PC-9 (cell line): ENCODE measurements at regions of chr13 and their contacts with region 1.

Region 1: GRCh38 chr13:43006893-43007631 is 15.0 kb upstream of the EPSTI1 start:
- DNase-seq: peak in 1 of 2 experiments; percentile 49
- H3K4me3 ChIP-seq: no peak overlapping the region
- H3K27ac ChIP-seq: peak overlapping the region; percentile 62
- H3K4me1 ChIP-seq: peaks cover 34% of the 10 kb centered on the region
- H3K27me3 ChIP-seq: no peaks in the 10 kb centered on the region
- CTCF ChIP-seq: no peak

Region 2: GRCh38 chr13:42985312-42986175 is 21.5 kb before region 1 on chr13:
- CTCF ChIA-PET with region 1: no interaction called
- POLR2A ChIA-PET with region 1: interaction called, 16 read pairs
- intact Hi-C with region 1: no loop called
- DNase-seq: peak in 1 of 2 experiments; percentile 46
- H3K4me3 ChIP-seq: no peak overlapping the region
- H3K27ac ChIP-seq: 0 out of 2 replicates have a peak overlapping the region, but pooled peaks have one; percentile 19
- H3K4me1 ChIP-seq: peaks cover 34% of the 10 kb centered on the region
- H3K27me3 ChIP-seq: no peaks in the 10 kb centered on the region
- CTCF ChIP-seq: no peak

Region 3: DNA sequence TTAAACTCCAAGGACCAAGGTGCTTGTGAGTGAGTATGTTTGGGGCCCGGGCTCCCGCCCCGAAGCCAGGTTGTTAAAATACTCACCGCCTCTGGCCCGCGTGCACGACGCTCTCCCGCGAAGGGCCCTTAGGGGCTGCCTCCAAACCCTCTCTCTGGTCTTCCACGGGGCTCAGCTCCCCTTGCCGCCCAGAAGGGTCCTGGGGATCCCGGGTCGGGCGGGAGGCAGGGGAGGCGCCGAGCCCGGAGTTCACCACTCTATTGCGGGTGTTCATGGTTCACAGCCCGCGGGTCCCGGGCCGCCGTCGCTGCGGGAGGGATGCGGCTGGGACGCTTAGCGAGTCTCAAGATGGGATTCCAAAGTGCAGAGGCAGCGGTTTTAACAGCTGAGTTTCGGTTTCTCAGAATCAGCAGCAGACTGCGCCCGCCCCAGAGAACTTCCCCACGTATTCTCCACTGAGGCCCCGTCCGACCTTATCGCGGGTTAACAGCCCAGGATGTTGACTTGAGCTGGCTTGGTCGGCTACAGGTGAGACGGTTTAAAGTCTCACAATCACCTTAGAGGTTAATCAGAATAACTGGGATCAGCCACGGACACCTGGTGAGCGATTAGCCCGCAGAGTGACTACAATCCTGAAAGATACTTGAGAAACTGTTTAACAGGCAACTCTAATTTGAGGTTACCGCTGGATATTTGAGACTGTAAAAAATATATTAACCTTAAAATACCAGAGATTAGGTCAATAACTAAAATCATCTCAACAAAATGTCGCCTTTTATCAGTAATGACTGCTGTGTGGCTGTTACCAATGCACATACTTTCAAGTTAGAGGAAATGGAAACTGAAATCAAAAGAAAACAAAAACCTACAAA is 14.9 kb before region 1 on chr13 and contains the start of gene EPSTI1:
- CTCF ChIA-PET with region 1: interaction called, 5 read pairs
- POLR2A ChIA-PET with region 1: interaction called, 6 read pairs
- intact Hi-C with region 1: loop called (anchors 1 kb)
- DNase-seq: peak in 1 of 2 experiments; percentile 24
- H3K4me3 ChIP-seq: peak within 1 kb of the TSS; percentile 36; the same call in 1 of the 2 replicates
- H3K27ac ChIP-seq: no peak within 1 kb of the TSS
- H3K4me1 ChIP-seq: peaks cover 11% of the 10 kb centered on the region
- H3K27me3 ChIP-seq: no peaks in the 10 kb centered on the region
- CTCF ChIP-seq: no peak
- total RNA-seq, gene EPSTI1: 2.7 and 3.4 TPM in 2 replicates

Region 4: GRCh38 chr13:43303033-43303729 is 296.1 kb after region 1 on chr13:
- CTCF ChIA-PET with region 1: no interaction called
- POLR2A ChIA-PET with region 1: no interaction called
- intact Hi-C with region 1: no loop called
- DNase-seq: peak in 1 of 2 experiments; percentile 39
- H3K4me3 ChIP-seq: no peak overlapping the region
- H3K27ac ChIP-seq: no peak overlapping the region
- H3K4me1 ChIP-seq: no peaks in the 10 kb centered on the region
- H3K27me3 ChIP-seq: no peaks in the 10 kb centered on the region
- CTCF ChIP-seq: peak; percentile 53; the same call in 1 of the 2 replicates